Caco-2 (cell line): ENCODE measurements at regions of chr9 and their contacts with region 1.

Region 1: DNA sequence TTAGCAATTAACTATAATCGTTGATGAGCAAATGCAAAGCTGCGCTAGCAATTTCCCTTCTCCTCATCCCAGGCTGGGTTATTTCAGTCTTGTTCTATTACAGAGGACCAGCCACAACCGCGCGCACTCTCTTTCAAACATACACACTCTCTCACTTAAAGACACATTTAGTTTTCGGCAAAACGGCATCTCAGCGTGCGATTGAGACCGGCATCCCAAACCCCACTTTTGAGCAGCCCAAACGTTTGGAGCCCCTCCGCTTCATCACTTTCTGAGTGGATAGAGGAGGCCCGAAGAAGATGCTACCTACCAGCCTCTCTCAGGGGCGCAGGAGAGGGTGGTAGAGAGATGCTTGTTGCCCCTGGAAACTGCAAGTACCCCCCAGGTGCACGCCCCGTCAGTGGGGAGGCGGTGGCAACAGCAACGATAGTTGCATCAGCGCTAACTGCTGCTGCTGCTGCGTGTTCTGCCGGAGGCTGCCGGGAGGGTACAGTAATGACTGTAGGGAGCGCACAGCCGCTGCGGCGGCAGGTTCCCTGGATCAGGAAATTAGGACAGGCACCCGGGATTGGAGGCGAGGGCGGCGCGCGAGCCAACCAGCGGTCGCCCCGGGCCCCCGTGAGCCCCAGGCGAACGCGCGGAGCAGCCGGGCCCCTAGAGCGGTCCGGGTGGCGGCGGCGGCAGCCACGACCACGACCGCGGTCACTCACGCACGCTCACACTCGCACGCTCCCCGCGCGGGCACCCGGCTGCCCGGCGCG is 488 bp upstream of the VLDLR start:
- DNase-seq: peak; percentile 86 to 89
- H3K4me3 ChIP-seq: peak overlapping the region; percentile 77
- H3K4me3 Mint-ChIP-seq: peak overlapping the region; percentile 89
- H3K27ac Mint-ChIP-seq: peak overlapping the region; percentile 96
- H3K4me1 ChIP-seq: peaks cover 19% of the 10 kb centered on the region
- H3K4me1 Mint-ChIP-seq: no peaks in the 10 kb centered on the region
- H3K27me3 ChIP-seq: no peaks in the 10 kb centered on the region
- H3K27me3 Mint-ChIP-seq: no peaks in the 10 kb centered on the region
- CTCF ChIP-seq: peak in 1 of 2 experiments; percentile 9

Region 2: GRCh38 chr9:2241836-2242741 is 379.0 kb before region 1 on chr9:
- CTCF ChIA-PET with region 1: no interaction called
- POLR2A ChIA-PET with region 1: no interaction called
- intact Hi-C with region 1: loop called (anchors 10 kb)
- DNase-seq: peak; percentile 65 to 85
- H3K4me3 ChIP-seq: peak overlapping the region; percentile 39
- H3K4me3 Mint-ChIP-seq: peak overlapping the region; percentile 75
- H3K27ac Mint-ChIP-seq: peak overlapping the region; percentile 62
- H3K4me1 ChIP-seq: peaks cover 6% of the 10 kb centered on the region
- H3K4me1 Mint-ChIP-seq: peaks cover 13% of the 10 kb centered on the region
- H3K27me3 ChIP-seq: no peaks in the 10 kb centered on the region
- H3K27me3 Mint-ChIP-seq: no peaks in the 10 kb centered on the region
- CTCF ChIP-seq: no peak

Region 3: GRCh38 chr9:2367973-2368372 is 253.1 kb before region 1 on chr9:
- CTCF ChIA-PET with region 1: no interaction called
- POLR2A ChIA-PET with region 1: no interaction called
- intact Hi-C with region 1: no loop called
- DNase-seq: peak in 1 of 2 experiments; percentile 10
- H3K4me3 ChIP-seq: no peak overlapping the region
- H3K4me3 Mint-ChIP-seq: no peak overlapping the region
- H3K27ac Mint-ChIP-seq: no peak overlapping the region
- H3K4me1 ChIP-seq: no peaks in the 10 kb centered on the region
- H3K4me1 Mint-ChIP-seq: no peaks in the 10 kb centered on the region
- H3K27me3 ChIP-seq: no peaks in the 10 kb centered on the region
- H3K27me3 Mint-ChIP-seq: no peaks in the 10 kb centered on the region
- CTCF ChIP-seq: no peak

Region 4: GRCh38 chr9:2469681-2470221 is 151.3 kb before region 1 on chr9:
- CTCF ChIA-PET with region 1: no interaction called
- POLR2A ChIA-PET with region 1: no interaction called
- intact Hi-C with region 1: loop called (anchors 5 kb)
- DNase-seq: peak; percentile 50 to 57
- H3K4me3 ChIP-seq: no peak overlapping the region
- H3K4me3 Mint-ChIP-seq: no peak overlapping the region
- H3K27ac Mint-ChIP-seq: no peak overlapping the region
- H3K4me1 ChIP-seq: peaks cover 14% of the 10 kb centered on the region
- H3K4me1 Mint-ChIP-seq: peaks cover 6% of the 10 kb centered on the region
- H3K27me3 ChIP-seq: no peaks in the 10 kb centered on the region
- H3K27me3 Mint-ChIP-seq: no peaks in the 10 kb centered on the region
- CTCF ChIP-seq: peak; percentile 17 to 32

Region 5: DNA sequence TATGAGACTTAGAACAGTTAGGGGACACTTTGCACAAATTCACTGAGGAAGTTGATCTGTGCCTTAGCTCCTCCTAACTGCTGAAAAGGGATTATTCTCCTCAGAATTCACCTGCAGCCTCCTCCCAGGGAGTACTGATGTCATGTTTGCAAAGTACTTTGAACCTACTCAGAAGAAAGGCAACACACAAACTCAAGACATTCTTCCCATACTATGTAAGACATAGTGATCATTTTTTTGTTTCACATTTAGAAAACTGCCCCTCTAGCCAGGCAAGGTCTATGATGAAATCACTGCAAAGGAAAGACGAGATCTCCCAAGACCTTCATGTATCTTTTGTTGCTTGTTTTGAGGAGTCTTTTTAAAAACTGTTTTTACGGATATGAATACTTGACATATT is 10.1 kb before region 1 on chr9:
- CTCF ChIA-PET with region 1: no interaction called
- POLR2A ChIA-PET with region 1: no interaction called
- intact Hi-C with region 1: loop called (anchors 1 kb)
- DNase-seq: peak; percentile 32 to 42
- H3K4me3 ChIP-seq: no peak overlapping the region
- H3K4me3 Mint-ChIP-seq: peak overlapping the region; percentile 23
- H3K27ac Mint-ChIP-seq: peak overlapping the region; percentile 64
- H3K4me1 ChIP-seq: peaks cover 25% of the 10 kb centered on the region
- H3K4me1 Mint-ChIP-seq: peaks cover 26% of the 10 kb centered on the region
- H3K27me3 ChIP-seq: no peaks in the 10 kb centered on the region
- H3K27me3 Mint-ChIP-seq: no peaks in the 10 kb centered on the region
- CTCF ChIP-seq: no peak

Region 6: GRCh38 chr9:2727966-2728613 is 107.0 kb after region 1 on chr9:
- CTCF ChIA-PET with region 1: no interaction called
- POLR2A ChIA-PET with region 1: no interaction called
- intact Hi-C with region 1: loop called (anchors 2 kb)
- DNase-seq: peak in 1 of 2 experiments; percentile 16
- H3K4me3 ChIP-seq: no peak overlapping the region
- H3K4me3 Mint-ChIP-seq: no peak overlapping the region
- H3K27ac Mint-ChIP-seq: no peak overlapping the region
- H3K4me1 ChIP-seq: peaks cover 15% of the 10 kb centered on the region
- H3K4me1 Mint-ChIP-seq: peaks cover 5% of the 10 kb centered on the region
- H3K27me3 ChIP-seq: no peaks in the 10 kb centered on the region
- H3K27me3 Mint-ChIP-seq: no peaks in the 10 kb centered on the region
- CTCF ChIP-seq: peak in 1 of 2 experiments; percentile 45

Region 7: DNA sequence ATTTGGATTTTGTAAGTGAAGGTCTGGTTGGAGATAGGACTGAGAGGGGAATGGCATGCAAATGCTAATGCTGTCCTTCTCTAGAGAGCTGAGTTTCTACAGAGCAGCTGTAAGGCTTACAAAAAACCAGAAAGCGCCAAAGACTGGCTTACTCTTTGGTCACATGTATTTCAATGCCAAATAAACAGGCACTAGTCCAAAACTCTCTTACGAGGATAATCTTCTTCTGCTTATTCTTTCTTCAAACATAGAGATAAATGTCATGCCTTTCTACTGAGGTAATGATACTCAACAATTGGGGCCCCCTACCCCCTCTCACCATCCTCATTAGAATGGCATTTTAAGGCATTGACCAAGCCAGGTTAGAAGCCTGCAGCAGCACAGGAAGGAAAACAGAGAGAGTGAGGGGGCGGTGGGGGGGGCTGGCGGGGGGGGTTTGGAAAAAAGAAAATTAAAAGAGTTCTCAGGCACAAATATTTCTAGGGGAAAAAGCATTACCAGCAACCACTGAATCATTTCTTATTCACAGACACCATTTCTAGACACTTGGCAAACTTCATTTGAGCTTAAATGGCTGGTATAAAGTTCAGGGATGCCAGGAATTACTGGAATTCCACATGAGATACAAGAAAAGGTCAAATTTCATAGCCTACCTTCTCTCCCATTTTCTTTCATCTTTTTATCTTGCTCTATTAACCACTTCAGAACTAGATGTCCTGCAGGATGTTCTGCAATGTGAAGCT is 188.8 kb after region 1 on chr9:
- CTCF ChIA-PET with region 1: no interaction called
- POLR2A ChIA-PET with region 1: no interaction called
- intact Hi-C with region 1: loop called (anchors 5 kb)
- DNase-seq: peak; percentile 78 to 79
- H3K4me3 ChIP-seq: no peak overlapping the region
- H3K4me3 Mint-ChIP-seq: peak overlapping the region; percentile 48
- H3K27ac Mint-ChIP-seq: peak overlapping the region; percentile 75
- H3K4me1 ChIP-seq: peaks cover 50% of the 10 kb centered on the region
- H3K4me1 Mint-ChIP-seq: peaks cover 8% of the 10 kb centered on the region
- H3K27me3 ChIP-seq: no peaks in the 10 kb centered on the region
- H3K27me3 Mint-ChIP-seq: no peaks in the 10 kb centered on the region
- CTCF ChIP-seq: no peak

Region 8: DNA sequence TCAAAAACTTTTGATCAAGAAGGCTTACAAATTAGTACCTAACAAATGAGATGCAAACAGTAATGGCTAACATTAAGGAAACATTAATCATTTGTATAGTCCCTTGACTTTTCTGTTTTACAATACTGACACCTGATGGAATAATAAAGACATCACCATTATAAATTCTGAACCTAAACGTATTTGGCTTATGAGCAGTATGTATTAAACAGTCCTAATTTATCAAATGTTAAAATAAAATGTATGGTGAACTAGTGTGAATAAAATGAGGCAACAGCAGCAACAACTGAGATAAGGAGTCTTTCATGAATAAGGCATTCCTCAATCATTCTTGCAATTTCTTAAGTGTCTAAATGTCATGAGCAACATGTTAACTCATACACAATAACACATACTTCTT is 216.8 kb after region 1 on chr9:
- CTCF ChIA-PET with region 1: no interaction called
- POLR2A ChIA-PET with region 1: no interaction called
- intact Hi-C with region 1: loop called (anchors 5 kb)
- DNase-seq: no peak
- H3K4me3 ChIP-seq: no peak overlapping the region
- H3K4me3 Mint-ChIP-seq: no peak overlapping the region
- H3K27ac Mint-ChIP-seq: no peak overlapping the region
- H3K4me1 ChIP-seq: peaks cover 8% of the 10 kb centered on the region
- H3K4me1 Mint-ChIP-seq: peaks cover 7% of the 10 kb centered on the region
- H3K27me3 ChIP-seq: no peaks in the 10 kb centered on the region
- H3K27me3 Mint-ChIP-seq: no peaks in the 10 kb centered on the region
- CTCF ChIP-seq: no peak